ENCODE measurements at regions of chr17 and their contacts with region 1.

Region 1: DNA sequence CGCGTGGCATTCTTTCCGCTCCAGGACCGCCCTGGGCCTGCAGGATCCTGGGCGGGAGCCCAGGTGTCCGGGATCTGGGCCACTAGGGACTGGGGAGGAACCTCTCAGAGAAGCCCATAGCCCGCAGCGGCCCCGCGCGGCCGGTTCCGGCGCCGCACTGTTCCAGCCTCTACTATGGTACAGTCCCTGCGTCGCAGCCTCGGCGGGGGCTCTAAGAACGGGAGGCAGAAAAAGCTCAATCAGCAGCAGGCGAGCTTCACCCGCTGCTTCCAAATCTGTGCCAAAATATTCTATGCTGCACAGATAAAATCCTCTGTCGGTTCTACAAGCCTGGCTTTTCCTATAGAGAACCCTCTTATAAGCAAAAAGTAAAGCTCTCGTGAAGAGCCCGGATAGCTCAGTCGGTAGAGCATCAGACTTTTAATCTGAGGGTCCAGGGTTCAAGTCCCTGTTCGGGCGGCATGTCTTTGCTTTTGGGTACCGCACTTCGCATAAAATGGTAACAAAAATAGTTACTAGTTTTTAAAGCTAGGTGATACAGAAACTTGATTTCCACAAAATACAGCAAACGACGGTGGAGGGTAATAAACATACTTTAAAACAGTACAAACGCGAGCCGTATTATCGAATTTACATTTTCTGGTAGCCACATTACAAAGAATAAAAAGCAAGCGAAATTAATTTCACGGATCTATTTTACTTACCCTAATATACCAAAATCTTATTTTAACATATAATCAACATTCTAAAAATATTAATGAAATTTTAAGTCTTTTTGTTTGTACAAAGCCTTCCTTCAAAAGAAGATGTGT is 661 bp upstream of the ALOXE3 start:
- DNase-seq: peak; percentile 84 to 92 (median 89)
- H3K4me3 ChIP-seq: peak overlapping the region; percentile 58
- H3K27ac ChIP-seq: peak overlapping the region; percentile 52 to 69
- H3K4me1 ChIP-seq: peaks cover 13% of the 10 kb centered on the region
- H3K27me3 ChIP-seq: no peaks in the 10 kb centered on the region
- CTCF ChIP-seq: peak; percentile 87 to 95 (median 88)
- EP300 ChIP-seq: no peak
- POLR2A ChIP-seq: no peak

Region 2: DNA sequence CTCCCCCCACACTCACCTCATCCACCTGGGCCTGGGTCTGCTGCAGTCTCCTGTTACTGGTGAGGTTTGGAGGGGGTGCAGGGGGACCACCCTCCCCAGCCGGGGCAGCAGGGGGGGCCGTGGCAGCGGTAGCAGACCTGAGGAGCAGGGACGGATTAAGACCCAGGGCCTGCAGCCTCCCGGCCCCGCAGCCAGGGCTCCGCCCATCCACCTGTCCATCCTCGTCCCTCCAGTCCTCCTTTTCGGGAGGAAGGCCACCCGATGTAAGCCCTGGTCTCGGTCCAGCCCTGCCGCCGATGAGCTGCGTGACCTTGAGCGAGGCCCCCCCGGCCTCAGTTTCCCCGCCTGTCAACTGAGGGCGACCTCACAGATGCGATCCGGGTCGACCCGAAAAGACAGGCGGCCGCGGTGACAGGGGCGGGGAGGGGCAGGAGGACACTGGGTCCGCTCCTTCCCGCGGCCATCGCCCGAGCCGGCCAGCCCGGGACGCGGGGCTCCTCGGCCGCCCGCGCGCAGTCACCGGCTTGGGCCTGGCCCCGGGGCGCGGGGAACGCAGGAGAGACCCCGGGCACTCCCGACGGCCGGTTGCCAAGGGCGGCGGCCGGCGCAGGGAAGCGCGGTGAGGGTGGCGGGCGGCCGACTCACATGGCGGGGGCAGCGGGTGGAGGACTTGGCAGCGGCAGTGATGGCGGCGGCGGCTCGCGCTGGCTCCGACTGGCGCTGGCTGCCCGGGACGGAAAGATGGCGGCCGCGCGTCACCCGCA is 43.4 kb after region 1 on chr17 and contains the start of gene VAMP2:
- intact Hi-C with region 1: loop called in 1 of 4 experiments (anchors 2 kb)
- DNase-seq: peak; percentile 83 to 93 (median 88)
- H3K4me3 ChIP-seq: peak within 1 kb of the TSS; percentile 77
- H3K27ac ChIP-seq: peak within 1 kb of the TSS; percentile 99 to 100
- H3K4me1 ChIP-seq: peaks cover 16% of the 10 kb centered on the region
- H3K27me3 ChIP-seq: no peaks in the 10 kb centered on the region
- CTCF ChIP-seq: peak in 2 of 3 donors; percentile 17 to 23
- EP300 ChIP-seq: no peak
- POLR2A ChIP-seq: peak; percentile 95
- total RNA-seq, gene VAMP2: 35.5 to 147 (median 118) TPM

Region 3: DNA sequence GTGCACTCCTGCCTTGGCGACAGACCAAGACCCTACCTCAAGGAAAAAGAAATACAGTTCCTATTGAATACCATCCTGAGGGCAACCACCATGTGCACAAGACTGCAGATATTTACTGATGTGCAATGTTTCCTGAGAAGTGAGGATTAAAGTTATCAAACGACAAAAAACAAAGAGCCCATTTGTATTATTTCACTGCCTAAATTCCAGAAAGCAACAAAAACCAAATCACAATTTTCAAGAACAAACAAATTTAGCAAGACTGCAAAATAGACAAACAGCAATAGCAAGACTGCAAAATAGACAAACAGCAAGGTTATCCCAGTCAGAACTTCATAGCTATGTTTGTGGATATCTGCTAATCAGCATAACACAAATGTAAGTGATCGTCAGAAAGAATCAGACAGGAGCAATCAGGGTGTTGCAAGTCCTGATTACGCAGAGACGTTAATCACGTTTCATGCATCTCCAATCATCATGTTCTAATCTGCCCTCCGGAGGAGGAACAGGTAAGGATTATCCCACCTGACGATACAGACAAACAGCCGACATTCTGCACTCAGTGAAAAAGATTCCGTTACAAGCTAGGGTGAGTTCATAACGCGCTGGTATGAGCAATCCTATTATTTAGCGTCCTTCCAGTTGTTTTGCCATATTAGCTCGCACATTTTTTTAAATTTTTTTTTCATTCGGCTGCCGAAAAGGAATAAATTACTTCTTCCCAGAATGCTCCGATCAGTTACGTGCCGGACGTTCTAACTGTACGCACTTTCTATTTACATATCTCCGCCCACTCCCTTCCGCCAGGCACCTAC is 54.3 kb after region 1 on chr17:
- intact Hi-C with region 1: loop called in 1 of 4 experiments (anchors 5 kb)
- DNase-seq: peak; percentile 64 to 82 (median 71)
- H3K4me3 ChIP-seq: peak overlapping the region; percentile 40
- H3K27ac ChIP-seq: peak overlapping the region; percentile 89 to 91
- H3K4me1 ChIP-seq: peaks cover 6% of the 10 kb centered on the region
- H3K27me3 ChIP-seq: no peaks in the 10 kb centered on the region
- CTCF ChIP-seq: no peak
- EP300 ChIP-seq: peak; percentile 57
- POLR2A ChIP-seq: peak; percentile 97

Region 4: GRCh38 chr17:8189711-8190477 is 70.9 kb after region 1 on chr17 and contains the start of gene BORCS6:
- intact Hi-C with region 1: loop called in 3 of 4 experiments (anchors 2 to 5 kb)
- DNase-seq: peak; percentile 94 to 97 (median 95)
- H3K4me3 ChIP-seq: peak within 1 kb of the TSS; percentile 97
- H3K27ac ChIP-seq: peak within 1 kb of the TSS; percentile 72 to 84
- H3K4me1 ChIP-seq: peaks cover 16% of the 10 kb centered on the region
- H3K27me3 ChIP-seq: no peaks in the 10 kb centered on the region
- CTCF ChIP-seq: no peak
- EP300 ChIP-seq: no peak
- POLR2A ChIP-seq: peak; percentile 82
- total RNA-seq, gene BORCS6: 5.5 to 7.2 (median 6.7) TPM

Region 5: GRCh38 chr17:8222630-8223356 is 103.8 kb after region 1 on chr17:
- intact Hi-C with region 1: loop called in 3 of 4 experiments (anchors 2 to 10 kb)
- DNase-seq: peak; percentile 96 to 98 (median 97)
- H3K4me3 ChIP-seq: peak overlapping the region; percentile 69
- H3K27ac ChIP-seq: peak overlapping the region; percentile 96
- H3K4me1 ChIP-seq: peaks cover 6% of the 10 kb centered on the region
- H3K27me3 ChIP-seq: no peaks in the 10 kb centered on the region
- CTCF ChIP-seq: no peak
- EP300 ChIP-seq: no peak
- POLR2A ChIP-seq: peak; percentile 84

Region 6: DNA sequence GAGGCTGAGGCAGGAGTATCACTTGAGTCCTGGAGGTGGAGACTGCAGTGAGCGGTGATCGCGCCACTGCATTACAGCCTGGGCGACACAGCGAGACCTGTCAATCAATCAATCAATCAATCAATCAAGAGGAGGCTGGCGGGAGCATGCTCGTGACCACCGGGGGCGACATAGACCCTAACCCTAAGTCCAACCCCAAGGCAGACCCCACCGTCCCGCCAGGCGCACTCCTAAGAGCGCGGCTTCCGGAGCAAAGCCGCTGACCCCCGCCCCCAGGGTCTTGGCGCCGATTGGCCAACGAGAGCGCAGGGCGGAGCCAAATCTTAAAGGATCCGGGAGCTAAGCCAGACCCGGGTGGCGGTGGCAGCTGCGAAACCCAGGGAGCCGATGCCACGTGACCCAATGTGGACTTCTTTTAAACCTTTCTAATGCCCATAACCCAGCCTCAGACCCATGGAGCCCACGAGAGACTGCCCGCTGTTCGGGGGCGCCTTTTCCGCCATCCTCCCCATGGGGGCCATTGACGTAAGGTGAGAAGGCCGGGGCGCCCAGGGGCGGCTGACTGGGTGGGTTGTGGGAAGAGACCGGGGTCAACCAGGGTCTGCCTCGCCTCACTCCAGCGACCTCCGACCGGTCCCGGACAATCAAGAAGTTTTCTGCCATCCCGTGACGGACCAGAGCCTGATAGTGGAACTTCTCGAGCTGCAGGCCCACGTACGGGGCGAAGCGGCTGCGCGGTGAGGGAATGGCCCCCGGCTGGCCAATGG is 169.5 kb after region 1 on chr17 and contains the start of gene RANGRF:
- intact Hi-C with region 1: loop called in 3 of 4 experiments (anchors 5 to 10 kb)
- DNase-seq: peak; percentile 89 to 94 (median 92)
- H3K4me3 ChIP-seq: peak within 1 kb of the TSS; percentile 77
- H3K27ac ChIP-seq: peak within 1 kb of the TSS; percentile 72 to 88
- H3K4me1 ChIP-seq: peaks cover 2% of the 10 kb centered on the region
- H3K27me3 ChIP-seq: no peaks in the 10 kb centered on the region
- CTCF ChIP-seq: no peak
- EP300 ChIP-seq: no peak
- POLR2A ChIP-seq: peak; percentile 63
- total RNA-seq, gene RANGRF: 14.5 to 37.8 (median 28.0) TPM

Region 7: GRCh38 chr17:8294814-8295316 is 175.9 kb after region 1 on chr17:
- intact Hi-C with region 1: loop called in 1 of 4 experiments (anchors 10 kb)
- DNase-seq: no peak
- H3K4me3 ChIP-seq: peak overlapping the region; percentile 74
- H3K27ac ChIP-seq: peak overlapping the region in 1 of 2 donors; percentile 43
- H3K4me1 ChIP-seq: no peaks in the 10 kb centered on the region
- H3K27me3 ChIP-seq: no peaks in the 10 kb centered on the region
- CTCF ChIP-seq: no peak
- EP300 ChIP-seq: no peak
- POLR2A ChIP-seq: no peak

Measured in ovary (tissue), 10 donors.